ENCODE measurements at regions of chr10 and their contacts with region 1.

Region 1: GRCh38 chr10:84139126-84140035 is at the start of gene GHITM:
- DNase-seq: peak; percentile 99
- ATAC-seq: peak; percentile 96
- H3K4me3 ChIP-seq: peak within 1 kb of the TSS; percentile 80 to 98 (median 94)
- H3K4me3 Mint-ChIP-seq: peak within 1 kb of the TSS; percentile 96
- H3K27ac ChIP-seq: peak within 1 kb of the TSS; percentile 90 to 98
- H3K27ac Mint-ChIP-seq: peak within 1 kb of the TSS; percentile 90
- H3K4me1 ChIP-seq: peaks cover 16 to 21% of the 10 kb centered on the region in 2 donors
- H3K4me1 Mint-ChIP-seq: peaks cover 30% of the 10 kb centered on the region
- H3K27me3 ChIP-seq: no peaks in the 10 kb centered on the region
- H3K27me3 Mint-ChIP-seq: no peaks in the 10 kb centered on the region
- CTCF ChIP-seq: peak; percentile 44
- total RNA-seq, gene GHITM: 71.9 and 75.1 TPM in 2 replicates

Region 2: DNA sequence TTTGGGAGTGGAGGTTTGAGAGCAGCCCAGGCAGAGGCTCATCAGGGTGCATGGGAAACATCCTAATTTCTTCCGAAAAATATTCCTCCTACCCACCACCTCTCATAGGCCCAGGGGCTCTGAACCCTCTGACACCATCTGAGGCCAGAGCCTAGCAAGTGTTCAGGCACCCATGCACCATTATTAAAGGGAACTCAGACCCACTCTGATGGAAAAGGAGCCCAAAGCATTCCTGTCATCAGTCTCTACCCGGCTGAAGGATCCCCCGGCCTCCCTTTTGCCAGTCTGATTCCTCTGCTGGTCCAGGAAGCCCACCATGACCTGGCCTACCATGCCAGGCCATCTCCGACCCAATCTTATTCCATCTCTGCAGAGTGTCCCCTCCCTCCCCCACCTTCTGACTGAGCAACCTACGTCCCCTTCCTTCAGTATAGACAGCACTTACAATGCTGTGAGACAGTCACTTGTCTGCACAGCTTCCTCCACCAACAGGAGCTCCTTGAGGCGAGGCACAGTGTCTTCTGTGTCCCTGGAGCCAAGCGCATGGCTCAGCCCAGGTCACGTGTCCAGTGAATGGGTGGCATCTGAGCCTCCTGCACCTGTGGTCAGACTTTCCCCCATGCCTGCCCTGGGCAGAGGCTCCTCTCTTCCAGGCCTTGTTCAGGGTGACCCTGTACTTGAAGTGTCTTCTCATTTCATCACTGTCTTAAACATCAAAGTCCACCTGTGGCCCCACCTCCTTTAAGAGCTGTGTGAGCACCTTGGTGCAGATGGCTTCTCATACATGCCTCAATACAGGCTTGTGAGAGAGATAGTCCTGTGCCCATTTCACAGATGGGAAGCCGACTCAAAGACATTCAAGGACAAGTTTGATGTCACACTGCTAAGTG is 33.3 kb after region 1 on chr10:
- CTCF ChIA-PET with region 1: interaction called, 3 read pairs
- POLR2A ChIA-PET with region 1: no interaction called
- intact Hi-C with region 1: loop called (anchors 1 kb)
- DNase-seq: no peak
- ATAC-seq: peak; percentile 45
- H3K4me3 ChIP-seq: no peak overlapping the region
- H3K4me3 Mint-ChIP-seq: peak overlapping the region; percentile 40
- H3K27ac ChIP-seq: peak overlapping the region; percentile 46 to 78
- H3K27ac Mint-ChIP-seq: peak overlapping the region; percentile 90
- H3K4me1 ChIP-seq: peaks cover 17 to 31% of the 10 kb centered on the region in 2 donors
- H3K4me1 Mint-ChIP-seq: peaks cover 26% of the 10 kb centered on the region
- H3K27me3 ChIP-seq: no peaks in the 10 kb centered on the region
- H3K27me3 Mint-ChIP-seq: no peaks in the 10 kb centered on the region
- CTCF ChIP-seq: no peak

Region 3: GRCh38 chr10:84179059-84179710 is 39.8 kb after region 1 on chr10:
- CTCF ChIA-PET with region 1: interaction called, 3 read pairs
- POLR2A ChIA-PET with region 1: no interaction called
- intact Hi-C with region 1: loop called (anchors 1 kb)
- DNase-seq: peak; percentile 87
- ATAC-seq: peak; percentile 89
- H3K4me3 ChIP-seq: peak overlapping the region in 2 of 5 experiments; percentile 15 to 50
- H3K4me3 Mint-ChIP-seq: no peak overlapping the region
- H3K27ac ChIP-seq: peak overlapping the region; percentile 74 to 77
- H3K27ac Mint-ChIP-seq: no peak overlapping the region
- H3K4me1 ChIP-seq: peaks cover 25 to 32% of the 10 kb centered on the region in 2 donors
- H3K4me1 Mint-ChIP-seq: peaks cover 5% of the 10 kb centered on the region
- H3K27me3 ChIP-seq: peaks cover 0 to 1% (median 0%) of the 10 kb centered on the region in 4 experiments
- H3K27me3 Mint-ChIP-seq: no peaks in the 10 kb centered on the region
- CTCF ChIP-seq: no peak

Region 4: DNA sequence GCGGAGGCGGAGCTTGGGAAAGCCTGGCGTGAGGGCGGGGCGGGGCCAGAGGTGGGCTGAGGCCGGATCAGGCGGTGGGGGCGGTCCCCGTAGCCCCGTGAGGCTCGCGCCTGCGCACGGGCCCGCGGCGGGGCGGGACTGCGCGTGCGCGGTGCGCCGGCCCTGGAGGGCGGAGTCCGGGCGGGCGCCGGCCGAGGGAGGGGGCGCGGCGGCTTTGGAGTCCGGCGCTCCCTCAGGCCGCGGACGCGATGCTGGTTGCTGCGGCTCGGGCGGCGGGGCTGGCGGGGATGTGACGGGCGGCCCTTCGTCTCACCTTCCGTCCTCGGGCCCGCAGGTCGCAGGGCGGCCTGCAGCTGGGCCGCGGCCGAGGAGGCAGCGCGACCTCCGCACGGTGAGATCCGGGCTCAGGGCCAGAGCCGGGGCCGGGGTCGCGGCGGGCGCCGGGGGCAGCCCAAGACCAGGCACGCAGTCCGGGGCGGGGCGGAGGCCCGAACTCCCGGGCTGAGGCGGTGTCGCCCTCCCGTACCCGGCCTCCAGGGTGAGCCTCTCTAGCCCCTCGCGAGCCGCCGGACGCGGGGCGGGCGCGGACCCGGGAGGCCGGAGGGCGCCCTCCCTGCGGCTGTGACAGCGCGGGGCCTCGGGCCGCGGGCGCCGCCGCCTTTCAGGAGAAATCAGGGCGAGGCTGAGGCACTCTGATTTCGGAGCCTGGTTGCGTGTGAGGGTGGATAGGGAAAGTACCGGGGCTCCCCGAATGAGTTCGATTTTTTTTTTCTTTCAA is 189.2 kb after region 1 on chr10 and contains the start of gene CCSER2:
- CTCF ChIA-PET with region 1: interaction called, 6 read pairs
- POLR2A ChIA-PET with region 1: no interaction called
- intact Hi-C with region 1: loop called (anchors 1 kb)
- DNase-seq: peak; percentile 94
- ATAC-seq: peak; percentile 84
- H3K4me3 ChIP-seq: peak within 1 kb of the TSS; percentile 48 to 71 (median 63)
- H3K4me3 Mint-ChIP-seq: peak within 1 kb of the TSS; percentile 92
- H3K27ac ChIP-seq: peak within 1 kb of the TSS; percentile 62 to 88
- H3K27ac Mint-ChIP-seq: peak within 1 kb of the TSS; percentile 93
- H3K4me1 ChIP-seq: peaks cover 20 to 25% of the 10 kb centered on the region in 2 donors
- H3K4me1 Mint-ChIP-seq: peaks cover 28% of the 10 kb centered on the region
- H3K27me3 ChIP-seq: no peaks in the 10 kb centered on the region
- H3K27me3 Mint-ChIP-seq: no peaks in the 10 kb centered on the region
- CTCF ChIP-seq: peak; percentile 24
- total RNA-seq, gene CCSER2: 43.2 and 45.9 TPM in 2 replicates

Measured in B cell (primary cell).